Pancreas (tissue), 10 donors: ENCODE measurements at regions of chr22 and their contacts with region 1.

Region 1: GRCh38 chr22:36873680-36874537 is 13.1 kb downstream of the NCF4 start:
- DNase-seq: peak in 3 of 6 donors; percentile 24 to 50 (median 39)
- ATAC-seq: peak; percentile 89 to 97 (median 93)
- H3K4me3 ChIP-seq: no peak overlapping the region
- H3K27ac ChIP-seq: peak overlapping the region in 3 of 4 donors; percentile 10 to 56 (median 26)
- H3K4me1 ChIP-seq: peaks cover 0 to 4% (median 0%) of the 10 kb centered on the region in 3 donors
- H3K27me3 ChIP-seq: no peaks in the 10 kb centered on the region
- CTCF ChIP-seq: peak; percentile 10 to 41 (median 24)

Region 2: DNA sequence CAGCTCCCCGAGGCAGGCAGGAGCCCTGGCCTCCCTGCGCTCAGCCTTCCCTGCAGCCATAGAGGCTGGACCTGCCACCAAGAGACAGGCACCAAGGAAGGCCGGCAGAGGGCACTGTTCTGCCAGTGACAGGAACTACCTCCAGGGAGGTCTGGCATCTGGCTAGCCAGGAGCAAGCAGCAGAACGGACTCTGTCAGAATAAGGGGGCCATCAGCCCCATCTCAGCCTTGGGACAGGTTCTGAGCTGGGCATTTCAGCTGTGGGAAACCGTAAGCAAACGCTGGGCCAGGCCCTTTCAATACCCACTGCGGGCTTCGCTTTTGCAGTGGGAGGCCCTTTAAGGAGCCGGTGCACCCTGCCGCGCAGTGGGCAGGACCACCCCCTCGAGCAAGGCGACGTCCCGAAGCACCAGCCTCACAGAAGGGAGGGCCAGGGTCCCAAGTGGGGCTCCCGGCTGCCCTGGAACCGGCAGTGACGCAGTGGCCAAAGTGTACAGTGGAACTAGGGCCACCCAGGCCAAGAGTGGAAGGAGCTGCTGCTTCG is 116.2 kb before region 1 on chr22:
- intact Hi-C with region 1: no loop called
- DNase-seq: peak; percentile 70 to 93 (median 84)
- ATAC-seq: peak; percentile 80 to 95 (median 89)
- H3K4me3 ChIP-seq: no peak overlapping the region
- H3K27ac ChIP-seq: no peak overlapping the region
- H3K4me1 ChIP-seq: peaks cover 0 to 6% (median 5%) of the 10 kb centered on the region in 3 donors
- H3K27me3 ChIP-seq: no peaks in the 10 kb centered on the region
- CTCF ChIP-seq: peak; percentile 80 to 90 (median 83)

Region 3: DNA sequence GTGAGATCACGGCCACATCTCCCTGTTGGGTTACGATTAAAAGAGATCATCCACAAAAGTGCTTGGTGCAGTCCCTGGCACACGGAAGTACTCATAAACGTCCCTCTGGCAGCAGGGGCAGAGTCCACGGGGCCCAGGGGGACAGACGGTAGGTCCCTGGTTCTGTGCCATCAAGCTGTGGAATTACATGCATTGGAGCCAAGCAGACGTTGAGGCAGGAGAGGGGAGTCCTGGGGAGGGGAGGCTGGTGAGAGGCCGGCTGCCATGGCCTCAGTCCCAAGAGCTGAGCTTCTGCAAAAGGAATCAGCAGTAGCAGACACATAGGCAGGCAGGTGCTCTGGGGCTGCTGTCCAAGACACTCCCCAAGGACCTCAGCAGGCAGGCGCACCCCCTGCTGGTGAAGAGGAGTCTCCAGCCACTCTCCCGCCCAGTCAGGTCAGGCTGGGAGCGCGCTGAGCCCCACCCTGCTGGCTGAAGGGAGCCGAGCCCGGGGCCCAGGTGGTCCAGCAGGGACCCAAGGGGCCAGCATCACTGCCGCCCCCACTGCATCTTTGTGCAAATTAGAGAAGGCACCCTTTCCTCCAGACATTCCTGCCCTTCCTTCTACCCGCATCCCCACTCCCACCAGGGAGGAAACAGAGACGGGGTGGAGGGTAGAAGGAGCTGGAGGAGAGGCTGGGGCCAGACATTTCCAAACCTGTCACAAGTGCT is 170.1 kb after region 1 on chr22:
- intact Hi-C with region 1: loop called in 1 of 3 experiments (anchors 10 kb)
- DNase-seq: peak; percentile 83 to 96 (median 88)
- ATAC-seq: peak; percentile 95 to 99 (median 98)
- H3K4me3 ChIP-seq: peak overlapping the region in 2 of 4 donors; percentile 5 to 10
- H3K27ac ChIP-seq: peak overlapping the region in 2 of 4 donors; percentile 29 to 56
- H3K4me1 ChIP-seq: peaks cover 0 to 7% (median 6%) of the 10 kb centered on the region in 3 donors
- H3K27me3 ChIP-seq: no peaks in the 10 kb centered on the region
- CTCF ChIP-seq: peak; percentile 77 to 88 (median 81)